Right ventricle myocardium superior (tissue), 1 donor: ENCODE measurements at regions of chr6 and their contacts with region 1.

Region 1: GRCh38 chr6:138517635-138518034 is 18.3 kb upstream of the NHSL1 start:
- DNase-seq: no peak
- ATAC-seq: no peak

Region 2: GRCh38 chr6:138428944-138429598 is 88.6 kb before region 1 on chr6:
- intact Hi-C with region 1: loop called (anchors 5 kb)
- DNase-seq: no peak
- ATAC-seq: peak; percentile 56